Activated T-helper 2 cell treated with anti-CD3 and anti-CD28 coated beads, Interferon-gamma antibody, Interleukin-2, Interleukin-4, amounts not matched to agents 10 μg/mL and 5 μg/mL and 100 μg/mL, durations not matched to agents 14 hours and 24 hours and 36 hours (primary cell): ENCODE measurements at regions of chr1 and their contacts with region 1.

Region 1: GRCh38 chr1:40338745-40339424 is 21.8 kb upstream of the COL9A2 start:
- DNase-seq: peak; percentile 82
- H3K4me3 Mint-ChIP-seq: no peak overlapping the region
- H3K27ac Mint-ChIP-seq: no peak overlapping the region
- H3K4me1 Mint-ChIP-seq: peaks cover 37% of the 10 kb centered on the region
- H3K27me3 Mint-ChIP-seq: no peaks in the 10 kb centered on the region

Region 2: DNA sequence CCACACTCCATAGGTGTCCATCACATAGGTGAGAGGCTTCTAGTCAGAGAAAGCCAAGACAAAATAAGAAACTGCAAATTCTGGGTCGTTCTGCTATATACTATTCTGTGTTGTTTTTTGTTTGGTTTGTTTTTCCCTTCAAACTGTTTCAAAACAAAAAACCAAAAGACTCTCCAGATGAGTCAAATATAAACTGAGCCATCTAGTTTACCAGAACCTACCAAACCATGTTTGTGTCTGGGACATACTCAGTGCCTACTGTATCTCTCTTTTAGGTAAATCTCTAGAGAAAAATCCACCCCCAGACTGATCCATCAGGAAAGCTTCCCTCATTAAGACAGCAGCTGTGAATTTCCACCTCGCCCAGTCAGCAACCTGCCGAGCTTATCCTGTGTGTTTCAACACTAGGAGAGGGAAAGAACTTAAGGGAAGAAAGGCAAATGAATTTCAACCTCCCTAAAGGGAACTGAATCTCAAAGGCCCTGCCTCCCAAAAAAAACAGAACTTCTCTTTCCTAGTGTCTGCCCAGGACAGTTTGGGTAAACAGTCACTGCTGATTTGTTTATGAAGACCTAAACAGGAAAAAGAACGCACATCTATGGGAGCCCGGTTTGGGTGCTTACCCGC is 259.0 kb before region 1 on chr1:
- intact Hi-C with region 1: loop called (anchors 5 kb)
- DNase-seq: no peak
- H3K4me3 Mint-ChIP-seq: no peak overlapping the region
- H3K27ac Mint-ChIP-seq: peak overlapping the region; percentile 69
- H3K4me1 Mint-ChIP-seq: peaks cover 2% of the 10 kb centered on the region
- H3K27me3 Mint-ChIP-seq: no peaks in the 10 kb centered on the region

Region 3: GRCh38 chr1:40096977-40097782 is 241.7 kb before region 1 on chr1 and contains the start of gene PPT1:
- intact Hi-C with region 1: loop called (anchors 5 kb)
- DNase-seq: peak; percentile 74
- H3K4me3 Mint-ChIP-seq: peak within 1 kb of the TSS; percentile 99
- H3K27ac Mint-ChIP-seq: peak within 1 kb of the TSS; percentile 93
- H3K4me1 Mint-ChIP-seq: peaks cover 24% of the 10 kb centered on the region
- H3K27me3 Mint-ChIP-seq: peaks cover 8% of the 10 kb centered on the region
- total RNA-seq, gene PPT1: 87.8 and 92.3 TPM in 2 replicates

Region 4: DNA sequence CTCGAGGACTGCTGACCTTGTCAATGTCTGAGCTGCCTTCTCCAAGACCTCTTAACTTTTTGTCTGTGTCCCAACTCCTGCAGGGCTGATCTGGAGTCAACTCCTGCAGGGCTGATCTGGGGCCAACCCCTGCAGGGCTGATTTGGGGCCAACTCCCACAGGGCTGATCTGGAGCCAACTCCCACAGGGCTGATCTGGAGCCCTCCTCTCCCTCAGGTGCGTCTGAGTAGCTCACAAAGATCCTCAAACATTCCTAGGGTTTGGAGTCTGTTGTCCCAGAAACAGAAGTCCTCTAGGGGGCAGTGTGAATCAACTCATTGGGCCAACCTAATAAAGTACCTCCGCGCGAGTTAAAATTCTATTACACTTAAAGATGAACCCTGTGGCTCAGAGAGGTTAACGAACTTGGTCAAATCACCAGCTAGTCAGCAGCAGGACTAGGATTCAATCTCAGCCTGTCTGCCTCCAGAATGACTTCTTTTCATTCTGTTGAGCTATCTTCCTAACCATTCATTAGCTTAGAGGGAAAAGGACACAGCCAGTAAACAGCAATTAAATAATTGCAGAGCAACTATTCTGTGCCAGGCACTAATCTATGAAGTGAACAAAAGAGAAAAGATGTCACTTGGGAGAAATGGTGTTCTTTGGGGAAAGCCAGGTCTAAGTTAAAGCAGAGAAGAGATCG is 194.9 kb before region 1 on chr1:
- intact Hi-C with region 1: loop called (anchors 1 kb)
- DNase-seq: peak; percentile 28
- H3K4me3 Mint-ChIP-seq: no peak overlapping the region
- H3K27ac Mint-ChIP-seq: no peak overlapping the region
- H3K4me1 Mint-ChIP-seq: peaks cover 18% of the 10 kb centered on the region
- H3K27me3 Mint-ChIP-seq: peaks cover 49% of the 10 kb centered on the region

Region 5: DNA sequence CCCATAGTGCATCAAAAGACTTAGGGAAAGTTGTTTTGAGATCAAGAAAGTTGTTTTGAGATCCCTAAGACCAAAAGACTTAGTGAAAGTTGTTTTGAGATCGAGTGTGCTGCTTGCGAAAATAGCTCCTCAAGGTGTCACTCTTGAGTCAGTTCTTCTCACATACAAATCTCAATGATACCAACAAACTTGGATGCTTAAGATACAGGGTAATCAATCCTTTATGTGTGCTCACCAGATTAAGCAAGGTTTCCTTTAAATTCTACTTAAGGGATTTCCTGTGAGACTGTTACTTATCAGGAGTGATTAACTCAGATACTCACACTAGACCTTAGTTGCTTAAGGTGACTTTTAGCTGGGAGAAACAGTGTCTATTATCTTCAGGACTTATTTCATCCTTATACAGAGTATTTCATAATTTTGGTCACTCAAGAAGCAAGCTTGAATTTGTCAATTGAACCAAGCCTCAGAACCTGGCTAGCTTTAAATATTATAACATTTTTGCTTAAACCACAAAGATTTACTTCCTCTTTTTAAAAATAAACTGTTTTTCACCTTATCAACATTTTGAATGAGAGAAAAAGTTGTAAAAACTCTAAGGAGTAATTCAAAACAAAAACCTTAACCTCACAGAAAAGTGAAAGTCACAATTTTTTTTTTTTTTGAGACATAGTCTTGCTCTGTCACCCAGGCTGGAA is 185.7 kb before region 1 on chr1:
- intact Hi-C with region 1: loop called (anchors 1 kb)
- DNase-seq: peak; percentile 13
- H3K4me3 Mint-ChIP-seq: no peak overlapping the region
- H3K27ac Mint-ChIP-seq: no peak overlapping the region
- H3K4me1 Mint-ChIP-seq: peaks cover 8% of the 10 kb centered on the region
- H3K27me3 Mint-ChIP-seq: peaks cover 14% of the 10 kb centered on the region

Region 6: GRCh38 chr1:40462956-40463590 is 124.2 kb after region 1 on chr1:
- intact Hi-C with region 1: no loop called
- DNase-seq: no peak
- H3K4me3 Mint-ChIP-seq: no peak overlapping the region
- H3K27ac Mint-ChIP-seq: no peak overlapping the region
- H3K4me1 Mint-ChIP-seq: no peaks in the 10 kb centered on the region
- H3K27me3 Mint-ChIP-seq: no peaks in the 10 kb centered on the region

Region 7: GRCh38 chr1:40546957-40547356 is 208.1 kb after region 1 on chr1:
- intact Hi-C with region 1: no loop called
- DNase-seq: no peak
- H3K4me3 Mint-ChIP-seq: no peak overlapping the region
- H3K27ac Mint-ChIP-seq: no peak overlapping the region
- H3K4me1 Mint-ChIP-seq: no peaks in the 10 kb centered on the region
- H3K27me3 Mint-ChIP-seq: no peaks in the 10 kb centered on the region